CD4-positive, alpha-beta T cell (primary cell): ENCODE measurements at regions of chr15 and their contacts with region 1.

Region 1: DNA sequence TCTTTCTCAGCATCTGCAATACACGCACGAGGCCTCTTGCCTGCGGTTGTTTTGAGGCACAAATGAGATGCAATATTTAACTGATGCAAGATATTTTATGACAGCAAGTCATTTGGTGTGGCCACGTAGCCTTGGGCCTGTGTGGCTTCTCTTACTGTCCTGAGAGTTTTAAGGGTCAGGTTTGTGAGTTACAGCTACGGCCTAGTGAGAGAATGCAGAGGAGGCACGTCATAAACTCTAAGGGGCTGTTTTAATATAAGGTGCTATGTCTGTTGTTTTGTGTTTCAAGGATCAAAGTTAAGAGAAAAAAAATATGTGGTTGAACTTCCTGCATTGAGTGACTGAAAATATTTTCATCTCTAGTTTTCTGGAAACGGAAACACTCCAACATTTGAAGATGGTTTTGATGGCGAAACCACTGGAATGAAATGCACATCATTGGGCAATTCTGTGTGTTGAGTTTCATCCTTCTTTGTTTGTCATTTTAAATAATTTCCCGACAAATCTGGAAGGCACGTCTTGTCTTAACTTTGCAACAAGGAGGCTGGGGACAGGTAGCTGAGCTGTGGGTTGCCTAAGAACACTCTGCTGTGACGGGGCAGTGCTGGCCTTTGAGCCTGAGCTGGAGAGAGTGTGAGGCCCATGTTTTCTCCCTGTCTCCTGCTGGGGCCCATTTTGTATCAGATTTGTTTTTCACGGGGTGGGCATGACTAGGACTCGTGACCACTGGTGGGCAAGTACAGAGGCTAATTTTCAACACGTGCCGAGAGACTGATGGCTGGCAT is 5.1 kb downstream of the APBA2 start:
- DNase-seq: peak in 5 of 14 experiments; percentile 33 to 73 (median 63)
- ATAC-seq: peak; percentile 73
- H3K4me3 ChIP-seq: no peak overlapping the region
- H3K4me3 Mint-ChIP-seq: peak overlapping the region; percentile 63
- H3K27ac ChIP-seq: peak overlapping the region; percentile 57 to 70
- H3K27ac Mint-ChIP-seq: peak overlapping the region; percentile 99
- H3K4me1 ChIP-seq: peaks cover 76% of the 10 kb centered on the region
- H3K4me1 Mint-ChIP-seq: peaks cover 82% of the 10 kb centered on the region
- H3K27me3 ChIP-seq: peaks cover 0 to 2% of the 10 kb centered on the region in 2 experiments
- H3K27me3 Mint-ChIP-seq: no peaks in the 10 kb centered on the region
- CTCF ChIP-seq: no peak

Region 2: GRCh38 chr15:28901987-28902745 is 11.3 kb after region 1 on chr15:
- CTCF ChIA-PET with region 1: no interaction called
- POLR2A ChIA-PET with region 1: interaction called, 13 read pairs
- intact Hi-C with region 1: no loop called
- DNase-seq: no peak
- ATAC-seq: no peak
- H3K4me3 ChIP-seq: no peak overlapping the region
- H3K4me3 Mint-ChIP-seq: no peak overlapping the region
- H3K27ac ChIP-seq: no peak overlapping the region
- H3K27ac Mint-ChIP-seq: peak overlapping the region; percentile 2
- H3K4me1 ChIP-seq: peaks cover 33% of the 10 kb centered on the region
- H3K4me1 Mint-ChIP-seq: peaks cover 85% of the 10 kb centered on the region
- H3K27me3 ChIP-seq: no peaks in the 10 kb centered on the region
- H3K27me3 Mint-ChIP-seq: no peaks in the 10 kb centered on the region
- CTCF ChIP-seq: no peak

Region 3: GRCh38 chr15:28921919-28922706 is 31.2 kb after region 1 on chr15:
- CTCF ChIA-PET with region 1: no interaction called
- POLR2A ChIA-PET with region 1: interaction called, 12 read pairs
- intact Hi-C with region 1: loop called in 1 of 2 experiments (anchors 2 kb)
- DNase-seq: no peak
- ATAC-seq: no peak
- H3K4me3 ChIP-seq: no peak overlapping the region
- H3K4me3 Mint-ChIP-seq: peak overlapping the region; percentile 83
- H3K27ac ChIP-seq: no peak overlapping the region
- H3K27ac Mint-ChIP-seq: peak overlapping the region; percentile 84
- H3K4me1 ChIP-seq: peaks cover 64% of the 10 kb centered on the region
- H3K4me1 Mint-ChIP-seq: peaks cover 82% of the 10 kb centered on the region
- H3K27me3 ChIP-seq: no peaks in the 10 kb centered on the region
- H3K27me3 Mint-ChIP-seq: no peaks in the 10 kb centered on the region
- CTCF ChIP-seq: no peak

Region 4: GRCh38 chr15:28935326-28935725 is 44.4 kb after region 1 on chr15:
- CTCF ChIA-PET with region 1: no interaction called
- POLR2A ChIA-PET with region 1: interaction called, 15 read pairs
- intact Hi-C with region 1: loop called (anchors 2 to 5 kb)
- DNase-seq: peak in 13 of 14 experiments; percentile 23 to 67 (median 49)
- ATAC-seq: peak; percentile 32
- H3K4me3 ChIP-seq: no peak overlapping the region
- H3K4me3 Mint-ChIP-seq: peak overlapping the region; percentile 63
- H3K27ac ChIP-seq: no peak overlapping the region
- H3K27ac Mint-ChIP-seq: peak overlapping the region; percentile 93
- H3K4me1 ChIP-seq: peaks cover 73% of the 10 kb centered on the region
- H3K4me1 Mint-ChIP-seq: peaks cover 75% of the 10 kb centered on the region
- H3K27me3 ChIP-seq: no peaks in the 10 kb centered on the region
- H3K27me3 Mint-ChIP-seq: no peaks in the 10 kb centered on the region
- CTCF ChIP-seq: peak; percentile 58

Region 5: DNA sequence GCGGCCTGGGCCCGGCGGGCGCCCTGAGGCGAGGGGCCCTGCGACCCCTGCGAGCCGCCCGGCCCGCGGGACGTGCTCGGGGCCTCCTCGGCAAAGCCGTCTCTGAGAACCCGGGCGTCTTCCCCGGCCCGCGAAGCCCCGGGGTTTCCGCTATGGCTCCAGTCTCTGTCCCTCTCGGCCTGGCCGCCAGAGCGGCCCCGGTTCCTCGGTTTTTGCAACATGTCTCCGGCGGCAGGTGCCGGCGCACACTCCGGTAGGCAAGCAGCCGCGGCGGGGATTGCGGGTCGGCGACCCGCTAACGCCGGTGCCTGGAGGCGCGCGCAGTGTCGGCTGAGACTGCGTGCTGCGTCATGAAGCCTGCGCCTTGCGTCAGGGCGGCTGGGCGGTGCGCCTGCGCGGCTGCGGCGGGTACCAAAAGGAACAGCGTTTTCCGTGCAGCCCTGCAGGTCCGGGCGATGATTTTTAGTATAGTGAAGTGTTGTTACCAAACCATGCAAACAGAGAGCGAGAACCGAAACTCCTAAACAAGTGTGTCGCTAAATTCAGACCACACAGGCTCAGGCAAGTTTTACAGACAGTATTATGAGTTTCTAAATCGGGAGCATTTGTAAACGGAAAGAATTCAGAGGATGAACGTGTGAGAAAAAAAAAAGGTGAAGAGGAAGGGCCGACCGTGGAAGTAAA is 378.7 kb after region 1 on chr15 and contains the start of gene NSMCE3:
- CTCF ChIA-PET with region 1: no interaction called
- POLR2A ChIA-PET with region 1: interaction called, 3 read pairs
- intact Hi-C with region 1: loop called in 1 of 2 experiments (anchors 2 kb)
- DNase-seq: peak; percentile 82 to 96 (median 90)
- ATAC-seq: peak; percentile 78
- H3K4me3 ChIP-seq: peak within 1 kb of the TSS; percentile 81
- H3K4me3 Mint-ChIP-seq: peak within 1 kb of the TSS; percentile 99
- H3K27ac ChIP-seq: peak within 1 kb of the TSS; percentile 88 to 94
- H3K27ac Mint-ChIP-seq: peak within 1 kb of the TSS; percentile 97
- H3K4me1 ChIP-seq: peaks cover 14% of the 10 kb centered on the region
- H3K4me1 Mint-ChIP-seq: peaks cover 63% of the 10 kb centered on the region
- H3K27me3 ChIP-seq: no peaks in the 10 kb centered on the region
- H3K27me3 Mint-ChIP-seq: no peaks in the 10 kb centered on the region
- CTCF ChIP-seq: no peak
- total RNA-seq, gene NSMCE3: 46.1 to 46.9 TPM